ENCODE measurements at regions of chr1 and their contacts with region 1.

Region 1: GRCh38 chr1:37486680-37487618 is 12.6 kb downstream of the ZC3H12A start:
- DNase-seq: no peak
- H3K4me3 ChIP-seq: no peak overlapping the region
- H3K27ac ChIP-seq: peak overlapping the region; percentile 94 to 97
- H3K4me1 ChIP-seq: peaks cover 37% of the 10 kb centered on the region
- H3K27me3 ChIP-seq: no peaks in the 10 kb centered on the region
- CTCF ChIP-seq: peak; percentile 91 to 98 (median 96)
- POLR2A ChIP-seq: no peak

Region 2: GRCh38 chr1:37448195-37448594 is 38.8 kb before region 1 on chr1:
- intact Hi-C with region 1: no loop called
- DNase-seq: no peak
- H3K4me3 ChIP-seq: no peak overlapping the region
- H3K27ac ChIP-seq: no peak overlapping the region
- H3K4me1 ChIP-seq: no peaks in the 10 kb centered on the region
- H3K27me3 ChIP-seq: no peaks in the 10 kb centered on the region
- CTCF ChIP-seq: no peak
- POLR2A ChIP-seq: no peak

Region 3: DNA sequence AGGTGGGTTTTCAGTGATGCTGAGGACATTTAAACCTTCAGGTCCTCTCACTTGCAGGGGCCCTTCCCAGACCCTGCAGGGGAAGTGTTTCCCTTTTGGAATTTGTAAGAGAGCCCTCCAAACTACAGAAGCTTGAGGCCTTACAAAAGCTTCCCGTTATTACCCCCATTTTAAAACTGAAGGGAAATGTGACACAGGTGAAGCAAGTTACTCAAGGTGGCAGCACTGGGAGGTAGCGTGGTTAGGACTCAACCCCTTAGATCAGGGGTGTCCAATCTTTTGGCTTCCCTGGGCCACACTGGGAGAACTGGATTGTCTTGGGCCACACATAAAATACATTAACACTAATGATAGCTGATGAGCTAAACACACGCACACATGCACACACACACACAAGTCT is 28.4 kb before region 1 on chr1:
- intact Hi-C with region 1: loop called (anchors 2 kb)
- DNase-seq: no peak
- H3K4me3 ChIP-seq: no peak overlapping the region
- H3K27ac ChIP-seq: peak overlapping the region; percentile 19 to 20
- H3K4me1 ChIP-seq: peaks cover 2% of the 10 kb centered on the region
- H3K27me3 ChIP-seq: no peaks in the 10 kb centered on the region
- CTCF ChIP-seq: peak in 1 of 4 experiments; percentile 57
- POLR2A ChIP-seq: no peak